Posterior vena cava (tissue), 2 donors: ENCODE measurements at regions of chrX and their contacts with region 1.

Region 1: GRCh38 chrX:115642895-115643530 is 82.0 kb downstream of the PLS3 start:
- DNase-seq: no peak

Region 2: DNA sequence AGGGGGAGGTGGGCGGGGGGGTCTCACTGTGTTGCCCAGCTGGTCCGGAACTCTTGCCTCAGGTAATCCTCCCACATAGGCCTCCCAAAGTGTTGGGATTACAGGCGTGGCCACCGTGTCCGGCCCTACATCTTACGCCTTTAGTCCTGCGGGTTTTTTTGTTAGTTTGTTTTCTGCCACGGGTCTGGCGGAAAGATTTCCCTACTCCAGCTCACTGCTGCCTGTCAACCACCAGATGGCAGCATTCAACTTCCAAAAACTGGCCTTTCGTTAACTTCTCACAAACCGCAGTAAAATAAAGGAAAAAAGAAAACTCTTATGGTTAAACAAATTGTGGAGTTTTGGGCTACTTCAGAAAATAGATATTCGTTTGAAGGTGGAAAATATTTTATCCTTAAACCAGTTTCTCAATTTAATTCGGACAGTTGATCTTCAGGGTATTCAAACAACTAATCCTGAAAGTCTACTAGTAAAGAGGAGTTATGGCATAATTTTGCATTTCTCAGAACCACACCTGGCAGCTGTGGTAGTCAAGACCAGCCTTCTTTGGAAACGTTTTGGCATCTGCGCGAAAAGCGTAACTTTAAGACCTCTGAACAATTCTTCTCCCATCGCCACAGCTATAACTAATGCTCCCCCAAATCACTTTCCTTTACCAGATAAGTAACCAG is 312.4 kb before region 1 on chrX:
- intact Hi-C with region 1: loop called in 1 of 2 experiments (anchors 5 kb)
- DNase-seq: no peak

Region 3: GRCh38 chrX:115665122-115665521 is 22.1 kb after region 1 on chrX:
- intact Hi-C with region 1: no loop called
- DNase-seq: no peak